OCI-LY7 (cell line): ENCODE measurements at regions of chr13 and their contacts with region 1.

Region 1: DNA sequence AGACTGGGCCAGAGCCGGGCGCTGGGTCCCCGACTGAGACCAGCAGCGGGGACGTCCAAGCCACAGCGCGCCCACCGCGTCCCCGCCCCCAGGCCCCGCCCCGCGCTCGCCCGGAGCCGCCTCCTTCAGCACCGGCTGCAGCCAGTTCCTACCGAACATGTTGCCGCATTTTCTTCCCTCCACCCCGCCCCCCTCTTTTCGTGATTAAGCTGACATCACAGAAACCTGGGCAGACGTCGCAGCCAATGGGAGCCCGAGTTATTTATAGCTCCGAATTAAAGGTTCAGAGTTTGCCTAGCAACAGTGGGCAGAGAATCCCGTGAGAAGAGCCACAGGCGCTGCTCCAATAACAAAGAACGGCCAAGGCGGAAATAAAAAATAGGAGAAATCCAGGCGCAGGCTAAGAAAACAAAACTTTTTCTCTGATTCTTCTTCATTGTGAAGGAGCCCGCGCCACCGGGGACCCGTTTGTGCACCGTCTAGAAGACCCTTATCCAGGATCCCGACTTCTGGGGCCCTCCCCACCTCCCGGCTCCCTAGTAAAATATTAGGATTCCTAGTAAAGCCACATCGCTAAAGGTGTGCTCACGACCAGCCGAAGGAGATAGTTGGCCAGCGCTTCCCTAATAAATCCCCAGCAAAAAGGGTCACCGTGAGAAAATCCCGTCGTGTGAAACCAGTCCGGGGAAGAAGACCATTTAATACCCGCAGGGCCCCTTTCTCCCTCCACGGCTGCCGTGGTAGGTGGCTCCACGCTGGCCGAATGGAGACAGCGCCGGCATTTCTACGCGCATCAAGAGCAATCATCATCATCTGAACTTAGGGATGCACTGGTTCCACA is 61.7 kb downstream of the SERP2 start:
- DNase-seq: peak; percentile 90
- H3K4me3 ChIP-seq: peak overlapping the region; percentile 66
- H3K27ac ChIP-seq: peak overlapping the region; percentile 21
- H3K4me1 ChIP-seq: peaks cover 17% of the 10 kb centered on the region
- CTCF ChIP-seq: no peak

Region 2: GRCh38 chr13:43905435-43906031 is 529.8 kb before region 1 on chr13:
- CTCF ChIA-PET with region 1: no interaction called
- POLR2A ChIA-PET with region 1: no interaction called
- intact Hi-C with region 1: loop called (anchors 2 kb)
- DNase-seq: peak; percentile 74
- H3K4me3 ChIP-seq: no peak overlapping the region
- H3K27ac ChIP-seq: no peak overlapping the region
- H3K4me1 ChIP-seq: no peaks in the 10 kb centered on the region
- CTCF ChIP-seq: peak; percentile 91

Region 3: DNA sequence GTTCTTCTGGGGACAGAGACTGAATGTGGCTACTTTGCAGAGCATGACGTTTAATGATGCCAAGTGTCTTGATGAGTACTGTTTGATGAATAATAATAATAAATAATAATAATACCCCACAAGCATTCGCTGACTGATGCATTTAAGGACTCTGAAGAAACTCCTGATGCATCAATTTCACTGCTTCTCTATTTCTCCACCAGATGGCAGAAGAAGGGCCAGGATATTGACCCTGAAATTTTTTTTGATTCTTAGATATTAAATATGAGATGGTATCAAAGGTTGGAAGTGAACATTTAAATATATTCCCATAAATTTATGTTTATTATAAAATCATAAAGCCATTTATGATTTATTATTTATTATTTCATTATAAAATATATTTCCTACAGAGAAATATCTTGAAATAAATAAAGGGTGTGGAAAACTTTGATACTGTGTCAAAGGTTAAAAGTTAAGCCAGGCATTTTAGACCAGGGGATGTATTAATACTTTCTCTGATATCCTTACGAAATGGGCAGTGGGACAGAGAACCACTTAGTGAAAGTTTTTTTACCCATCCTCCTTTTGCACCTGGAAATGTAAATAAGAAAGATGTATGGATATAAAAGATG is 384.8 kb before region 1 on chr13:
- CTCF ChIA-PET with region 1: no interaction called
- POLR2A ChIA-PET with region 1: no interaction called
- intact Hi-C with region 1: loop called (anchors 2 kb)
- DNase-seq: peak; percentile 27
- H3K4me3 ChIP-seq: no peak overlapping the region
- H3K27ac ChIP-seq: no peak overlapping the region
- H3K4me1 ChIP-seq: no peaks in the 10 kb centered on the region
- CTCF ChIP-seq: peak; percentile 83

Region 4: DNA sequence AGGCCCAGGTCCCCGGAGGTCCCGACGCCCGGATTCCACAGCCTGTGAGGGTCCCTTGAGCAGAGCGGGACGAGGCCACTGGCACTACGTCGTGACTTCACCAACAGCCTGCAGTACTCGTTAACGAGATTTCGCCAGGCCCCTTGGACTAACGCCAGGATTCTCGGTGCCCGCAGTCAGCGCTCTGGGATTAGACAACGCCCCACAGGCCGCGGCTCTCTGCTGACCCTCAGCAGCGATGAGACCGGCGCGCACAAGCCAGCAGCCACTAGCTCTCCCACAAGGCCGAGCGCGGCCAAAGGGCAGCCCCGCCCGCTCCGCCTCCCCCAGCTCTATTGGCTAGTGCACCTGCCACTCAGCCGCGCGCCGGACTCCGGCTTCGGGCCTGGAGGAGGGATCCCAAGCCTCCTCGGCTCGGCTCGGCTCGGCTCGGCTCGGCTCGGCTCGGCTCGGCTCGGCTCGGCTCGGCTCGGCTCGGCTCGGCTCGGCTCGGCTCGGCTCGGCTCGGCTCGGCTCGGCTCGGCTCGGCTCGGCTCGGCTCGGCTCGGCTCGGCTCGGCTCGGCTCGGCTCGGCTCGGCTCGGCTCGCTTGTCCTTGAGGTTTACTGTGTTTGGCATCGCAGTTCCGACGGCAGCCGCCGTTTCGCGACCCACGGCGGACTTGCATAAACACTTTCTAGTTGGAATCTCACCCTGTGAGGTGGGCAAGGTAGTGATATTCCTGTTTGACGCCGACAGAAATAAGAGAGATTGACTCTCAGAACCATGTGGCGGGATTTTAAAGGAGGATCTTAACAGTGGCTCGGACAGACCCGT is 293.4 kb before region 1 on chr13:
- CTCF ChIA-PET with region 1: no interaction called
- POLR2A ChIA-PET with region 1: no interaction called
- intact Hi-C with region 1: loop called (anchors 5 kb)
- DNase-seq: peak; percentile 94
- H3K4me3 ChIP-seq: peak overlapping the region; percentile 78
- H3K27ac ChIP-seq: no peak overlapping the region
- H3K4me1 ChIP-seq: peaks cover 36% of the 10 kb centered on the region
- CTCF ChIP-seq: no peak

Region 5: DNA sequence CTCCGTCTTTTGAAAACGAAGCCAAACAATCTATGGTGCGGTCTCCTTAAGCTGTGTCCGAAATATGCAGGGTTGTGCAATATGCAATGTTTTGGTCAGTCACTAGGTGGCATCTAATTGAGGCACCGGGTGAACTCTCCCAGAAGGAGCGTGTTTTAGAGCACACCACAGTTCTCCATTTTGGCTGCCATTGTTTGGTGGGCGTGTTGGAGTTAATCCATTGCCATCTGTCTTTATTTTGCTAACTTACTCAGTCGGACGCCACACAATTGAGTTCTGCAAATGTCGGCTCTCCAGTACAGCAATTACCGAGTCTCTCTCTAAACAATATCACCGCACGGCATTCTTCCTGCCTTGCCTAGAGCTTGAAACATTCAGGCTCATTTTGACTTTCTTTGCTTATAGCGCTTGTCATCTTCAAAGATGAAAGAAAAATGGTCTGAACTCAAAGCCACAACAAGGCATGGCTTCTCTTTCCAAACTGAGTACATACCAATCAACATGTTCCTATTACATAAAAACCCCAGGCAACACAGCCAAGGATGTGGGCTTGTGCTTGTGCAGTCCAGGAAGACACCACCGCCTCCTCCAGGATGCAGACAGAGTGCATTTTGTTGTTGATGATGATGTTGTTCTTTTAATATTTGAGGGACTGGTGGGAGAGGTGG is 243.7 kb before region 1 on chr13:
- CTCF ChIA-PET with region 1: interaction called, 3 read pairs
- POLR2A ChIA-PET with region 1: interaction called, 4 read pairs
- intact Hi-C with region 1: loop called (anchors 2 kb)
- DNase-seq: peak; percentile 67
- H3K4me3 ChIP-seq: no peak overlapping the region
- H3K27ac ChIP-seq: no peak overlapping the region
- H3K4me1 ChIP-seq: no peaks in the 10 kb centered on the region
- CTCF ChIP-seq: peak; percentile 84

Region 6: GRCh38 chr13:44243198-44243857 is 192.0 kb before region 1 on chr13:
- CTCF ChIA-PET with region 1: interaction called, 5 read pairs
- POLR2A ChIA-PET with region 1: interaction called, 3 read pairs
- intact Hi-C with region 1: loop called (anchors 1 kb)
- DNase-seq: peak; percentile 84
- H3K4me3 ChIP-seq: no peak overlapping the region
- H3K27ac ChIP-seq: peak overlapping the region; percentile 51
- H3K4me1 ChIP-seq: peaks cover 38% of the 10 kb centered on the region
- CTCF ChIP-seq: peak; percentile 79

Region 7: GRCh38 chr13:44484562-44485138 is 49.3 kb after region 1 on chr13:
- CTCF ChIA-PET with region 1: interaction called, 27 read pairs
- POLR2A ChIA-PET with region 1: interaction called, 3 read pairs
- intact Hi-C with region 1: no loop called
- DNase-seq: no peak
- H3K4me3 ChIP-seq: no peak overlapping the region
- H3K27ac ChIP-seq: no peak overlapping the region
- H3K4me1 ChIP-seq: peaks cover 5% of the 10 kb centered on the region
- CTCF ChIP-seq: no peak